Gastrocnemius medialis (tissue), 4 donors: ENCODE measurements at regions of chr17 and their contacts with region 1.

Region 1: DNA sequence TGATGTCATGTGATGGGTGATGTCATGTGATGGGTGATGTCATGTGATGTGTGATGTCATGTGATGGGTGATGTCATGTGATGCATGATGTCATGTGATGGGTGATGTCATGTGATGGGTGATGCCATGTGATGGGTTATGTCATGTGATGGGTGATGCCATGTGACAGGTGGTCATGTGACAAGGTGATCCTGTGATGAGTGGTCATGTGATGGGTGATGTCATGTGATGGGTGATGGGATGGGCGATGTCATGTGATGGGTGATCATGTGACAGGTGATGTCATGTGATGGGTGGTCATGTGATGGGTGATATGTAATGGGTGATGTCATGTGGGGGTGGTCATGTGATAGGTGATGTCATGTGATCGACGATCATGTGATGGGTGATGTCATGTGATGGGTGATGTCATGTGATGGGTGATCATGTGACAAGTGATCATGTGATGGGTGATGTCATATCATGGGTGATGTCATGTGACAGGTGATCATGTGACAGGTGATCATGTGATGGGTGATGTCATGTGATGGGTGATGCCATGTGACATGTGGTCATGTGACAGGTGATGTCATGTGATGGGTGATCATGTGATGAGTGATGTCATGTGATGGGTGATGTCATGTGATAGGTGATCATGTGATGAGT is 17.2 kb downstream of the CD300LB start:
- DNase-seq: peak in 1 of 2 donors; percentile 28
- ATAC-seq: peak; percentile 5 to 22
- H3K4me3 ChIP-seq: no peak overlapping the region
- H3K27ac ChIP-seq: peak overlapping the region in 1 of 4 donors; percentile 80
- H3K4me1 ChIP-seq: peaks cover 13 to 19% of the 10 kb centered on the region in 2 donors
- H3K27me3 ChIP-seq: no peaks in the 10 kb centered on the region
- CTCF ChIP-seq: peak in 2 of 5 experiments; percentile 34
- POLR2A ChIP-seq: no peak

Region 2: GRCh38 chr17:74332763-74333283 is 181.3 kb before region 1 on chr17:
- in situ Hi-C with region 1: no loop called
- intact Hi-C with region 1: no loop called
- DNase-seq: no peak
- ATAC-seq: no peak
- H3K4me3 ChIP-seq: no peak overlapping the region
- H3K27ac ChIP-seq: no peak overlapping the region
- H3K4me1 ChIP-seq: no peaks in the 10 kb centered on the region
- H3K27me3 ChIP-seq: peaks cover 0 to 9% (median 0%) of the 10 kb centered on the region in 3 donors
- CTCF ChIP-seq: no peak
- POLR2A ChIP-seq: no peak

Region 3: DNA sequence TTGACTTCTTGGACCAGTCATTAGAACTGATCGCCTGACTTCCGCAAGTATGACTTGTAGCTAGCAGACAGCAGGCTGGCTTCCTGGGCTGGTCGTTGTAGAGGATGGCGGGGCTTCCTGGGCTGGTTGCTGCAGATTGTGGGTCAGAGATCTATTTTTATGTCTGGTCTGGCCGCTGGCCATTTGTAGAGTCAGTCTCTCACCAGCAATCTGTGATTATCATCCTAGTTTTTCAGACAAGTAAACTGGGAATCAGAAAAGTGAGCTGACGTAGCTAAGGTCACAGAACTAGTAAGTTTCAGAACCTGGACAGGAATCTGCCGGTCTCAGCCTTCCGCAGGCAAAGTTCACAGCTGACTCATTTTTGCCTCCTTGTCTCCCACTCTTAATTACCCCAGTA is 127.7 kb before region 1 on chr17:
- in situ Hi-C with region 1: no loop called
- intact Hi-C with region 1: loop called (anchors 5 kb)
- DNase-seq: peak; percentile 60 to 84
- ATAC-seq: peak; percentile 86 to 93
- H3K4me3 ChIP-seq: no peak overlapping the region
- H3K27ac ChIP-seq: peak overlapping the region; percentile 70 to 80 (median 75)
- H3K4me1 ChIP-seq: peaks cover 27 to 32% of the 10 kb centered on the region in 2 donors
- H3K27me3 ChIP-seq: no peaks in the 10 kb centered on the region
- CTCF ChIP-seq: no peak
- POLR2A ChIP-seq: no peak

Region 4: DNA sequence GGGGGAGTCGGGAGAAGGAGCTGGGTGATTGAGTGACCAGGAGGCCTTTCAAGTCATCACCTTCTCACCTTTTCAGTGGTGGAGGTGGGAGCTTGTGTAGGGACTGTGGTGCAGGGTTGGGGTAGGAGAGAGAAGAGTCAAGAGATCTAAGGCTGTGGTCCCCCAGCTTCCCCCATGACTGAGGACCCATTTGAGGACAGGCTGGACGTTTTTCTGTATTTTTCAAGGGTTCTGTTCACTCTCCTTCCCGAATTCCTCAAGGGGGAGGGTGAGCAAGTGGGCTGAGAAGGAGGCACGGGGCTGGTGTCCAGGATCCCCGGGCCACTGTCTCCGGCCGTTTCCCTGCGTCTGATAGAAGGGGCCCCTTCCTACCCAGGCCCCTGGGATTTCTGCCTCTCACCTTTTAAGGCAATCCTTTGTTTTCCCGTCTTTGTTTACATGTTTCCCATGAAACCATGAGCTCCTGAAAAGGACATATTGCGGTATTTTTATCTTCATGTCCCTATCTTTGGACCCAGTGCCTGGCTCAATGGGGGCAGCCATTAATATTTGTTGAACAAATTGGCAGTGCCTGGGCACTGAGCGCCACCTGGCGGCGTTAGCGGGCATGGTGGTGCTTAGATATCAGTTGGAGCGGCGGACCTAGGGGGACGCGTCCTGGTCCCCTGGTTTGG is 56.8 kb before region 1 on chr17:
- in situ Hi-C with region 1: no loop called
- intact Hi-C with region 1: no loop called
- DNase-seq: peak in 1 of 2 donors; percentile 78
- ATAC-seq: peak; percentile 24 to 28
- H3K4me3 ChIP-seq: peak overlapping the region in 2 of 4 donors; percentile 25 to 39
- H3K27ac ChIP-seq: peak overlapping the region; percentile 58 to 97 (median 69)
- H3K4me1 ChIP-seq: peaks cover 29 to 36% of the 10 kb centered on the region in 2 donors
- H3K27me3 ChIP-seq: no peaks in the 10 kb centered on the region
- CTCF ChIP-seq: peak; percentile 98 to 99 (median 98)
- POLR2A ChIP-seq: no peak

Region 5: DNA sequence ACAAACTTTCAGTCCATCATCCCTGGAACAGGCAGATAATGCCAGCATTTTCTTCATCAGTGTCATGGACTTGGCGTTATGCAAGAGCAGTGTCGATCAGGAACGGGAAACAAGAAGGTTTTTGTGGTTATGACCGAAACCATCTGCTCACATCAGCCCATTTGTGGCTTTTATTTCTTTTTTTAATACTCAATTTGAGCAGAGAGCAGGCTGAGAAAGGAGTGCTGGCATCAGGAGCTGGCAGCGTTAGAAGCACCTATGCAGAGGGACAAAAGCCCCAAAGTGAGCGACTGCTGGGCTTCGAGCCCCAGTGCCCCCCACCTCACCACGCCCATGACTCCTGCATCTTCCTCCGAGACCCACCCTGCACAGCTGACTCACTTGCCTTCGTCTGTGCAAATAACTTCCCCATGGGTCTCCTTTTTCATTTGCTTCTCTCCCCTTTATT is 125.6 kb after region 1 on chr17:
- in situ Hi-C with region 1: no loop called
- intact Hi-C with region 1: no loop called
- DNase-seq: no peak
- ATAC-seq: no peak
- H3K4me3 ChIP-seq: no peak overlapping the region
- H3K27ac ChIP-seq: no peak overlapping the region
- H3K4me1 ChIP-seq: no peaks in the 10 kb centered on the region
- H3K27me3 ChIP-seq: peaks cover 4 to 9% (median 5%) of the 10 kb centered on the region in 3 donors
- CTCF ChIP-seq: no peak
- POLR2A ChIP-seq: no peak